ENCODE measurements at regions of chr7 and their contacts with region 1.

Region 1: DNA sequence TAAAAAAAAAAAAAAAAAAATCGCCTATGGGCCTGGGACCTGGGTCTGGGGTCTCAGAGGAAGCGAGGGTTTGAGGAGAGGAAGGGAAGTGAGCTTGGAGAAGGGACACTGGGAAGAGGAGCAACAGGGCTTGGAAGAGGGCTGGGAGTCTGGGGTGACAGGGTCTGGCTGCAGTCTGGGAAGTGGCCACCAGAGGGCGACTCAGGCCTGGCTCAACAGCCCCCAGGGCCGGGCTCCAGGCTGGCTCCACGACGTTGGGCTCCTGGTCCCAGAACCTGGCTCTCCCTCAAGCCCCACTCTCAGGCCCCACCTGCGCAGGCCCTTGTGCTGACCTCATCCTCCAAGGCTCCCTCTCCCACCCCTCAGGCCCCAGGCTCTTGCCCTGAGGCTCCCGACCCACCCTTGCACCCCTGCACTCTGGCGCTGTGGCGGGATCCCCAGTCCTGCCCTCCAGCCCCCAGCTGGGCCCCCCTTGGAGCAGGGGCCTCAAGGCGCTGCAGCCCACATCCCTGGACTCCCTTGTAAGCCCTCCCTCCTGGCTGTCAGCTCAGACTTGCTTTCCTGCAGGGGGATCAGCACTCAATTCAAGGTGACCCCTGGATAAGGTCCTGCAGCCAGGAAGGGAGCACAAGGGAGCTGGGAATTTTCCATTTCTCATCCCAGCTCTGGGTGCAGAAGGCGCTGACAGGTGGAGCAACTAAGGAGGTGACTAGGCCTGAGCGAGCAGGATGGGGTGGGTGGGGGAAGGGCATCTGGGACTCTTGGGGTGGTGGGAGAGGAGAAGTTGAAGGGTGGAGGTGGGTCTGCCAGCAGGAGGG is 5.4 kb upstream of the SPACDR start:
- DNase-seq: peak; percentile 84
- ATAC-seq: peak; percentile 90
- H3K4me3 ChIP-seq: no peak overlapping the region
- H3K4me3 Mint-ChIP-seq: no peak overlapping the region
- H3K27ac ChIP-seq: no peak overlapping the region
- H3K27ac Mint-ChIP-seq: peak overlapping the region; percentile 53
- H3K4me1 ChIP-seq: peaks cover 9 to 21% of the 10 kb centered on the region in 2 donors
- H3K4me1 Mint-ChIP-seq: peaks cover 24% of the 10 kb centered on the region
- H3K27me3 ChIP-seq: no peaks in the 10 kb centered on the region
- H3K27me3 Mint-ChIP-seq: no peaks in the 10 kb centered on the region
- CTCF ChIP-seq: peak; percentile 87

Region 2: DNA sequence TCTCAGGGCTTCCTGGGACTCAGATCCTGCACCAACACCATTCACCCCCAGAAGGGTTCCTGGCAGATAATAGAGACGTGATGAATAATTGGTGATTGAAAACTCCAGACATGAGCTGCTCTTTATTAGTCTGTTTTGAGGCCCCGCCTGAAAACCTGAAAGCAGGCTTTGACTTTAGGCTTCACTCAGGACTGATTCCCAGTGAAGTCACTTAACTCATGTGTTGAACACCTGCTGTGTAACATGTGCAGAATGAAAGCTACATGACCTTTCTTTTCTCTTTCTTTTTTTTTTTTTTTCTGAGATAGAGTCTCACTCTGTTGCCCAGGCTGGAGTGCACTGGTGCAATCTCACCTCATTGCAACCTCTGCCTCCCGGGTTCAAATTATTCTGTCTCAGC is 14.2 kb before region 1 on chr7:
- CTCF ChIA-PET with region 1: interaction called, 16 read pairs
- POLR2A ChIA-PET with region 1: interaction called, 7 read pairs
- intact Hi-C with region 1: no loop called
- DNase-seq: no peak
- ATAC-seq: no peak
- H3K4me3 ChIP-seq: no peak overlapping the region
- H3K4me3 Mint-ChIP-seq: no peak overlapping the region
- H3K27ac ChIP-seq: no peak overlapping the region
- H3K27ac Mint-ChIP-seq: no peak overlapping the region
- H3K4me1 ChIP-seq: peaks cover under 1 to 7% of the 10 kb centered on the region in 2 donors
- H3K4me1 Mint-ChIP-seq: peaks cover 8% of the 10 kb centered on the region
- H3K27me3 ChIP-seq: no peaks in the 10 kb centered on the region
- H3K27me3 Mint-ChIP-seq: no peaks in the 10 kb centered on the region
- CTCF ChIP-seq: no peak

Region 3: DNA sequence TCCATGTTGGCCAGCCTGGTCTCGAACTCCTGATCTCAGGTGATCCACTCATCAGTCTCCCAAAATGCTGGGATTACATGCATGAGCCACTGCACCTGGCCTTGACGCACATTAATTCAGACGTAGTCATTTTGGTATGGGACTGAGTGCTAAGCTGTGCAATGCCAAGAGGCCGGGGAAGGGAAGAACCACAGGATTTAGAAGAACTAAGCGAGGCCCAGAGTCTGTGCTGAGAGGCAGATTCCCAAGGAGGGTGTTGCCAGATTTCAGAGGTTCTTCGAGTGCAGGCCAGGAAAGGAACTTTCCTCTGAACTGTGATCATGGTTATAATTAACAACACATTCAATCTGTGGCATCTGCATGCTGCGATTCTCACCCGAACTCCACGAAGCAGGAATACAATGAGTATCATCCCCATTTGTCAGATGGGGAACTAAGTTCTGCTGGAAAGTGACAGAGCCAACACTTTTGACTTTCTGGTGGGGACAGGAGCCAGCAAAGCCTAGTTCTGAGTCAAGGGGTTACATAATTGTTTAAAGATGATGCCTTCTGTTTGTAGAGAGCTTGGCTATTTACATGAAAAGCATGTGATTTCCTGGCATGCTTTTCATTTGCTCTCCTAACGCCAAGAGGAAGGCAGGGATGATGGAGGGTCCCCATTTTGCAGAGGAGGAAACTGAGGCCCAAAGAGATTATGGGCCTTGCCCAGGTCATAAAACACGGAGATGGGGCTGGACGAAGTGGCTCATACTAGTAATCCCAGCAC is 257.7 kb after region 1 on chr7:
- CTCF ChIA-PET with region 1: interaction called, 8 read pairs
- POLR2A ChIA-PET with region 1: interaction called, 3 read pairs
- intact Hi-C with region 1: loop called (anchors 1 kb)
- DNase-seq: no peak
- ATAC-seq: no peak
- H3K4me3 ChIP-seq: no peak overlapping the region
- H3K4me3 Mint-ChIP-seq: no peak overlapping the region
- H3K27ac ChIP-seq: no peak overlapping the region
- H3K27ac Mint-ChIP-seq: no peak overlapping the region
- H3K4me1 ChIP-seq: peaks cover 0 to 7% of the 10 kb centered on the region in 2 donors
- H3K4me1 Mint-ChIP-seq: peaks cover 3% of the 10 kb centered on the region
- H3K27me3 ChIP-seq: peaks cover 0 to 39% (median 8%) of the 10 kb centered on the region in 4 experiments
- H3K27me3 Mint-ChIP-seq: peaks cover 36% of the 10 kb centered on the region
- CTCF ChIP-seq: no peak